Activated B cell treated with CpG ODN at 0.5 μM for 24 hours (primary cell): ENCODE measurements at regions of chr17 and their contacts with region 1.

Region 1: DNA sequence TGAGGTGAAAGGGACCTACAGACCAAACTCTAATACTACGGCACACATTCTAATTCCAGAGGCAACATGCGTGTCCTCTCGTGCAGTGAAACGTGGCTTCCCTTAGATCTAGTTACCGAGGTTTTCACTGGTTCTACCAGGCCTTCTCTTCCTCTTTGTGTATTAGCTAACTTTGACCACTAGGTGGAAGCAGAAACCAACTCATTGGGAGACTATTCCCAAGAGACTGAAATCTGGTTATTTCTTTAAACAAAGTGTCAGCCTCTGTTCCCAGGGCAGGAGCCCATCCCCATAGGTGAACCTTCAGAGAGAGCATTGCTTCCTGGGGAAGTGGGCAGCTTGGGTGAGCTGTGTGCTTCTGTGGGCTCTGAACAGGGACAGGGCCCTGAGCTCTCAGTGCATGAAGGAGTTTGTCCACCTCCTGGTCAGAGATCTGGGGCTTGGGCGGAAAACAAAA is 19.7 kb upstream of the RCVRN start:
- DNase-seq: peak; percentile 31
- ATAC-seq: peak; percentile 77
- H3K4me3 Mint-ChIP-seq: no peak overlapping the region
- H3K27ac Mint-ChIP-seq: no peak overlapping the region
- H3K4me1 Mint-ChIP-seq: peaks cover 5% of the 10 kb centered on the region
- H3K27me3 Mint-ChIP-seq: no peaks in the 10 kb centered on the region
- CTCF ChIP-seq: peak; percentile 87

Region 2: GRCh38 chr17:9880582-9880999 is 44.2 kb before region 1 on chr17:
- CTCF ChIA-PET with region 1: no interaction called
- POLR2A ChIA-PET with region 1: no interaction called
- intact Hi-C with region 1: no loop called
- DNase-seq: no peak
- ATAC-seq: no peak
- H3K4me3 Mint-ChIP-seq: no peak overlapping the region
- H3K27ac Mint-ChIP-seq: no peak overlapping the region
- H3K4me1 Mint-ChIP-seq: no peaks in the 10 kb centered on the region
- H3K27me3 Mint-ChIP-seq: no peaks in the 10 kb centered on the region
- CTCF ChIP-seq: no peak

Region 3: DNA sequence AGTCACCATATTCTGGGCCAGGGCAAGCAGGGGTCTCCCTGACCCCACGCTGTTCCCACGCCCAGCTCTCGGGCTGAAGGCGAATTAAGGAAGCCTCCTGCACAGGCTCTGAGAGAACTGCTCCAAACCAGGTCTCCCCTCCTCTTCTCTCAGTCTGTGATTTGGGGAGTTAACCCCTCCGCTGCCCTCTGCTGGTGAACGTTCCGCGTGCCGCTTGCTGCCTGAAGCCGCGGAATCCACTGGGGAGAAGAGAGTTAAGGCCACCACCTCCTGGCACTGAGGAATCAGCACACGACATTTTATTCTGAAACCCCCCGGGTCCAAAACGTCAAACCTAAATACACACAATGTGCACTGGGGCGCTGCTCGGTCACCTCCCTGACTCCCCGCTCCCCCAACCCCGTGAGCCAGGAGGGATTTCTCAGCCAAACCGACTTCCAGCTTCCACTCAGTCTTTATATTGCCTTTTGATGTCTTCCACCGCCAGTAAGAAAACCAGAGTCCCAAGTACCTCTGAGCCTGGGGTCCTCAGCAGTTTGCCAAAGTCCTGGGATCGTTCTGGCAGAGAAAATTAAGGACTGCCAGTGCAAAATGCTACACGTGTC is 34.7 kb after region 1 on chr17:
- CTCF ChIA-PET with region 1: no interaction called
- POLR2A ChIA-PET with region 1: no interaction called
- intact Hi-C with region 1: loop called (anchors 2 kb)
- DNase-seq: no peak
- ATAC-seq: no peak
- H3K4me3 Mint-ChIP-seq: no peak overlapping the region
- H3K27ac Mint-ChIP-seq: no peak overlapping the region
- H3K4me1 Mint-ChIP-seq: no peaks in the 10 kb centered on the region
- H3K27me3 Mint-ChIP-seq: peaks cover 7% of the 10 kb centered on the region
- CTCF ChIP-seq: no peak

Region 4: DNA sequence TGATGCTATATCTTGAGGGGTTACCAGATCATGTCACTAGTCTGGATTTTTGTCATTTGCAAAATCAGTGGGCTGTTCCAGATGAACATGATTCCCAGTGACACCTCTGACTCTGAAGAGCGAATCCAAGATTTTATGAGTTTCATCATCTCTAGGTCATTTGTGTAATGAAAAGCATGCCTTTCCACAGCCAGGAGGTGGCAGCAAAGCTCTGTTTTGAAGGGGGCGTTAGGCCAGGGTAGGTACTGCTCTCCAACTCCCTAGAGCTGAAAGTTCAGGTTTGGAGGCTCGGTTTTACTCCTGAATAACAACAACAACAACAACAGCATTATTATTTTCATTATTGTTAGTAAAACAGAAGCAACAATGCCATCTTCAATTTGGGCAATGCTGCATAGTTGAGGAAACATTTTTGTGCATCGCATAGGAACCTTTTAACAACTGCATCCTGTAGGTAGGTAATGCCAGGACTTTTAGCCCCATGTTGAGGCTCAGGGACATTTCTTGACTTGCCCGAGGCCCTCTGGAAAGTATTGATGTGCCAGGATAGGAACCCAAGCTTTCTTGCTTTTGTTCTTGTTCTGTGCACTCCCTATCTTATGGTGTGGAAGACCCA is 371.1 kb after region 1 on chr17:
- CTCF ChIA-PET with region 1: interaction called, 3 read pairs
- POLR2A ChIA-PET with region 1: no interaction called
- intact Hi-C with region 1: loop called (anchors 5 kb)
- DNase-seq: no peak
- ATAC-seq: peak; percentile 49
- H3K4me3 Mint-ChIP-seq: no peak overlapping the region
- H3K27ac Mint-ChIP-seq: no peak overlapping the region
- H3K4me1 Mint-ChIP-seq: peaks cover 8% of the 10 kb centered on the region
- H3K27me3 Mint-ChIP-seq: peaks cover 10% of the 10 kb centered on the region
- CTCF ChIP-seq: no peak